Activated CD4-positive, alpha-beta T cell treated with anti-CD3 and anti-CD28 coated beads, Interleukin-2, amount 10 ng/mL, durations not matched to agents 24 days and 14 days (primary cell): ENCODE measurements at regions of chr6 and their contacts with region 1.

Region 1: DNA sequence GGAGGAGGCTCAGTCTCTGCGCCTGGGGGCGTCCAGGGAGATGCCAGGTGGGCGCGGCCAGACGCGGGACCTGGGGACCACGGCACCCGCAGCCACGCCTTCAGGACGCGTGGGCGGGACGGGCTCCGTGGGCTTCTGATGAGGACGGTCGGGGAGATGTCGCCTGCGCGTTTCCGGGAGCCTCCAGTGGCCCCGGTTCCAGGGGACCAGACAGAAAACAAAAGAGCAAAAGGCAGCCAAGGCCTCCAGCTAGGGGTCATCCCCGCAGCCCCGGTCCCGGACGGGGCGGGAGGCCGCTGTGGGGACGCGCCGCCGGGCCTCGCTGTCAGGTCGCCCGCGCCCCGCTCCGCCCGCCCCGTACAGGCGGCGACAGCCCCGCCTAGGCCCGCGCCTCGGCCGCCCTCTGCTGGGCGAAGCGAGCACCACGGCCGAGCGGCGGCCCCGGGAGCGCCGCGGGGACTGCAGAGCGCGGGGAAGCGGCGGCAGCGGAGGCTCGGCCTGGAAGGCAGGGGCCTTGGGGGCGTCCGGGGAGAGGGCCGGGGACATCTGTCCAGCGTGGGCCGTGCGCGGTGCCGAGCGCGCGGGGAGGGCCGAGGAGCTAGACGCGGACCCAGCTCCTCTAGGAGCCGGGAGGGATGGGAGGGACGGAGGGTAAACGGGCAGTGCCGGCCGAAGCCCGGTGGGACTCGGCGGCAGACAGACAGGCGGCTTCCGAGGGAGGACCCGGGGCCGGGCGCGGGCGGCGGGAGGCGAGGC is 48.7 kb downstream of the TMEM242 start:
- DNase-seq: peak; percentile 96
- H3K4me3 Mint-ChIP-seq: peak overlapping the region; percentile 85
- H3K27ac Mint-ChIP-seq: peak overlapping the region; percentile 86
- H3K4me1 Mint-ChIP-seq: peaks cover 7% of the 10 kb centered on the region
- H3K27me3 Mint-ChIP-seq: peaks cover 9% of the 10 kb centered on the region

Region 2: GRCh38 chr6:155327326-155328073 is 1947.1 kb before region 1 on chr6:
- intact Hi-C with region 1: loop called (anchors 10 kb)
- DNase-seq: peak; percentile 88
- H3K4me3 Mint-ChIP-seq: no peak overlapping the region
- H3K27ac Mint-ChIP-seq: peak overlapping the region; percentile 48
- H3K4me1 Mint-ChIP-seq: peaks cover 23% of the 10 kb centered on the region
- H3K27me3 Mint-ChIP-seq: no peaks in the 10 kb centered on the region

Region 3: DNA sequence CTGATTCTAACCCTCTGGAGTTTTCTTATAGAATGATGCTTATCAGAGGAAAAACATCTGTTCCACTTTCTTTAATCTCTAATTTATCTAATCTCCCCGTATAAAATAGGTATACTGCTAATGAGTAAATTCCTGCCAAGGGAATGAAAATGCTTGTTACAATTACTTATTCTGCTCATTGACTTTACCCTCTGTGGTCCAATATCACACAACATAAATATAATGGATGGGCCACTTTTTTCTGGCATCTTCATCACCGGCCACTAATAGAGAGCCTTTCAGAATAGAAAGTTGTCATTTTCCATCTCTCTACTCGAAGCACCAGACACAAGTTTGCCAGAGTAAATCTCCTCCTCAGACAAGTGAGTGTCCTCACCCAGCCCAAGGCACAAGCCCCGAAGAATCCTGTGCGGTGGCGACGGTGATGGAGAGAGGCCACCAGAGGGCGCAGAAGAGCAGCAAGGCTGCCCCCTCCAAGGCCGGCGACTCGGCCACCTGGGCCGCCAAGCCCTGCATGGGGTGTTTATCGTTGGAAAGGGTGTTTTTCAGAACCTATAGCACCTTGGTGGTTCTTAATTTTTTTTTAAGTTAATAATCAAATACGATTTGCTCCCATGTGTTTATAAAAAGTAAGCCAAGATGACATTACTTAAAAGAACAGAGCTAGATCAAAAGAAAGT is 710.4 kb before region 1 on chr6:
- intact Hi-C with region 1: loop called (anchors 1 kb)
- DNase-seq: peak; percentile 92
- H3K4me3 Mint-ChIP-seq: no peak overlapping the region
- H3K27ac Mint-ChIP-seq: no peak overlapping the region
- H3K4me1 Mint-ChIP-seq: peaks cover 2% of the 10 kb centered on the region
- H3K27me3 Mint-ChIP-seq: peaks cover 13% of the 10 kb centered on the region

Region 4: GRCh38 chr6:157034436-157035230 is 240.0 kb before region 1 on chr6:
- intact Hi-C with region 1: loop called (anchors 1 kb)
- DNase-seq: no peak
- H3K4me3 Mint-ChIP-seq: peak overlapping the region; percentile 72
- H3K27ac Mint-ChIP-seq: no peak overlapping the region
- H3K4me1 Mint-ChIP-seq: peaks cover 14% of the 10 kb centered on the region
- H3K27me3 Mint-ChIP-seq: no peaks in the 10 kb centered on the region

Region 5: DNA sequence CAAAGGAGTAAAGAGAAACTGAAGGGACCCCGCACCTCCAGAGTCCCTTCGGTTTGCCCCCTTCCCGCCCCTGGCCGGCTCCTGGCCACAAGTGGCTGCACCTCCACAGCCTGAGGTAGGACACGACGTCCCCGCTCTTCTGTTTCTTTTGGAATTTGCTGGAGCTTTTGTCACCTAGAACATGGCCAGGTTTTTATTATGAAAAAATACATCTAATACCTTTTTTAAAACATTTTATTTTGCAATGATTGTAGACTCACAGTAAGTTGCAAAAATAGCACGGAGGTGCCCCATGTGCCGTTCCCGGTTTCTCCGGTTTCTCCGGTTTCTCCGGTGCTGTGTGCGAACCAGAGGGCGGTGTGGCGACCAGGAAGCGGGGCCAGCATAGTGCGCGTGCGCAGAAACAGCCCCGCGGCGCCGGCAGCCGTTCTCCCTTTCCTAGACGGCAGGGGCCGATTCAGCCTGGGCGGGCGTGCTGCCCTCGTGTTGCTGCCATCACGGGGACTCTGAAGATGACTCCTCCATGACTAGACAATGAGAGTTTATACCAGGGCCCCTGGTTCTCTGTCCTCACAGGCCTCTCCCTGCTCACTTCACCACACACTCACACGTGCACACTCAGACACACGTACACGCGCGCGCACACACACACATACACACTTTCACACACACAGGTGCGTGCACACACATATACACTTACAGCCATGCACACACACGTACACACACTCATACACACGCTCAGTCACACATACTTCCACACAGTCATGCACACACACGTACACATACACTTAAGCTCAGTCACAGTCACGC is 53.4 kb before region 1 on chr6:
- intact Hi-C with region 1: loop called (anchors 5 kb)
- DNase-seq: peak; percentile 95
- H3K4me3 Mint-ChIP-seq: peak overlapping the region; percentile 56
- H3K27ac Mint-ChIP-seq: peak overlapping the region; percentile 78
- H3K4me1 Mint-ChIP-seq: peaks cover 20% of the 10 kb centered on the region
- H3K27me3 Mint-ChIP-seq: no peaks in the 10 kb centered on the region

Region 6: DNA sequence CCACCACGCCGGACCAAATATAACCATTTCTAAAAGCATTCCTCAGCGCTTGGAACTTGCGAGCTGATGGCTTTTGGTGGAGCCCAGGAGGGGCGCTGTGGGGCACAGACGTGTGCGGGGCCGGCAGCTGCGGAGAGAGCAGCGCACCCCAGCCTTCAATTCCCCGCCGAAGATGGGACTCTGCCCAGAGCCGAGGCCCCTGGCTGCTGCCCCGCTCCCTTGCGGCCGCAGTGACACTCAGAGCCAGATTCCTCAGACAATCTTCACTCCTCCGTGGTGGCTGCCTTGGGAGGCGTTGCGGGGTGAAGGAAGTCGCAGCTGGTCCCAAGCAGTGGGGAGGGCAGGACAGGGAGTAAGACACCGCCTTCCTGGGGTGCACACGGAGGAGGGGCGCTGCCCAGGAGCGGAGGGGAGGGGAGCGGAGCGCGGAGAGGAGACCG is 39.0 kb before region 1 on chr6:
- intact Hi-C with region 1: loop called (anchors 5 kb)
- DNase-seq: peak; percentile 85
- H3K4me3 Mint-ChIP-seq: peak overlapping the region; percentile 99
- H3K27ac Mint-ChIP-seq: peak overlapping the region; percentile 62
- H3K4me1 Mint-ChIP-seq: peaks cover 21% of the 10 kb centered on the region
- H3K27me3 Mint-ChIP-seq: peaks cover 52% of the 10 kb centered on the region